ENCODE measurements at regions of chr2 and their contacts with region 1.

Region 1: DNA sequence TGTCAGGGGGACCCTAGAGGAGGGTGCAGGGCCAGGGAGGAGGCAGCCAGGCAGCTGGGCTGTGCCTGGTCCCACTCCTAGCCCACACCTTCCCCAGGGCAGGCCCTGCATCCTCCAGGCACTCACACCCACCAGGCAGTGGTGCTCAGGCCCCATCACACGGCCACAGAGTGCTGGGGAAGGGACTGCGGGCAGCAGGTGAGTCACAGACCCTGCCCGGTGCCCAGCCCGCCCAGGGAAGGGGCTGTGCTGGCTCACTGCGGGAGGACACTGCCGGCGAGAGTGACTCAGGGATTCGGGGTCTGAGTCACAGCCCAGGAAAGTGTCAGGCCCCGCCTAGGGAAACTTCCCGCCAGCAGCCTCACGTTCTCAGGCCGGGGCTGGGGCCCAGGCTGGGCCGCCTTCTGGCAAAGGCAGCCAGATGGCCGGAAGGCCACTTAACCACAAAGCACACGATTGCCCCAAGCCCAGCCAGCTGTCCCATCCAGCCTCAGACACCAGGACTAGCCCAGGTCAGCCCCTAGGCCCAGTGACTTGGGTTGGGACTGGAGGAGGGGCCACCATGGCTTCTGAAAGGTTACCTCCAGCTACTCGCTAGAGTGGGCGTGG is 42.2 kb downstream of the BIN1 start:
- DNase-seq: peak in 1 of 2 experiments; percentile 43
- H3K4me3 ChIP-seq: no peak overlapping the region
- H3K27ac ChIP-seq: peak overlapping the region; percentile 59; the same call in 1 of the 2 replicates
- H3K4me1 ChIP-seq: peaks cover 0 to 15% (median 8%) of the 10 kb centered on the region in 4 experiments; a peak in 5 of 7 replicates
- H3K27me3 ChIP-seq: peaks cover 0 to 3% (median 0%) of the 10 kb centered on the region in 4 experiments; a peak in 1 of 7 replicates
- CTCF ChIP-seq: no peak
- EP300 ChIP-seq: no peak
- POLR2A ChIP-seq: no peak
- RAD21 ChIP-seq: 0 out of 4 replicates have a peak, but pooled peaks of 1 of the 2 experiments have one; percentile 3

Region 2: DNA sequence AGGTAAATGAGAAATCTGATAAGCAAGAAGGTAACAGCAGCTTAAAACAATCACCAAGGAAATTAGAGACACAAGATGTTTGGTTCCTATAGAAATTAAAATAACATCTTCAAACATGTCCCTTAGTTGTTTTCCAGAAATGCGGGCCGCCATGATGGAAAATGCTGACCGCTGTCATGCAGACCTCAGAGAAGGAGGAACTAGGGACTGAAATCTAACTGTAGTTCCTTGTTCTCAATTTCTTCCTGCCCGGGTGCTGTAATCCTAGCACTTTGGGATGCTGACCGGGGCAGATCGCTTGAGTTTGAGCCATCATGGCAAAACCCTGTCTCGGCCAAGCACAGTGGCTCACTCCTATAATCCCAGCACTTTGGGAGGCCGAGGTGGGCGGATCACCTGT is 115.0 kb before region 1 on chr2:
- CTCF ChIA-PET with region 1: no interaction called
- POLR2A ChIA-PET with region 1: no interaction called
- DNase-seq: no peak
- H3K4me3 ChIP-seq: no peak overlapping the region
- H3K27ac ChIP-seq: no peak overlapping the region
- H3K4me1 ChIP-seq: peaks cover 5 to 10% (median 8%) of the 10 kb centered on the region in 4 experiments
- H3K27me3 ChIP-seq: peaks cover 0 to 18% (median 8%) of the 10 kb centered on the region in 4 experiments; a peak in 5 of 7 replicates
- CTCF ChIP-seq: no peak
- EP300 ChIP-seq: no peak
- POLR2A ChIP-seq: no peak
- RAD21 ChIP-seq: no peak

Region 3: DNA sequence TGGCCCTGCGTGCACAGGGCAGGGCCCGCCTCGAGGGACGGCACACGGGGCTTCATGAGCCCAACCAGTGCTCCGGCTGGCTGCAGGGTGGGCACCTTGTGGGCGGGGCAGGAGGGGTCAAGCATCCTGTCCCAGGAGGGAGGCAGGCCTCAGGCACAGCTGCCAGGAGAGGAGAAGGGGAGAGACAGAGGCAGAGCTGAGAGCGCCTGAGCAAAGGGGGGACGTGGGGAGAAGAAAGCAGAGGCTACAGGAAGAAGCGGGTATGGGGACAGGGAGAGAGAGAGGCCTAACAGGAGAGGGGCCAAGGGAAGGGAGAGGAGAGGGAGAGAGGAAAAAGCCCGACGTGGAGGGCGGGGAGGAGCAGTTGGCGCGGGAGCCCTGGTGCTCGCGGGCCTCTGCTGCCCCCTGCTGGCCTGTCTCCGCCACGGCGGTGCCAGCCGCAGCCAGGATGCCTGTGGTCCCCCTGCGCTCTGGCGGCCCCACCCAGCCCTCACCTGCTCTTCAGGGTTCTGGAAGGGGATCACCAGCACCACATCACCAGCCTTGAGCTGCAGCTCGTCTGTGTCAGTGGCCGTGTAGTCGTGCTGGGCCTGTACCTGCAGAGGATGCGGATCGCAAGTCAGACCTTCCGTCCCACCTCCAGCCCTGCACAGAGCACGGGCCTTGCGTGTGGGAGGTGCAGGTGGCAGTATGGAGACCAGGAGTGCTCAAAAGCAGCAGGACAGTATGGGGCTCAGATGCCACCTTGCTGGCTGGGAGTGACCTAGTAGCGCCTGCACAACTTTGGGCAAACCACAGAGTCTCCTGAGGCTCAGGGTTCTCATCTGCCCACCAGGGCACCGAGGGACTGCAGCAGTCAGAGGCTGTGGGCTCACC is 14.6 kb before region 1 on chr2:
- CTCF ChIA-PET with region 1: interaction called, 35 read pairs
- POLR2A ChIA-PET with region 1: no interaction called
- DNase-seq: peak; percentile 41 to 95
- H3K4me3 ChIP-seq: no peak overlapping the region
- H3K27ac ChIP-seq: no peak overlapping the region
- H3K4me1 ChIP-seq: peaks cover 0 to 6% (median 0%) of the 10 kb centered on the region in 4 experiments; a peak in 2 of 7 replicates
- H3K27me3 ChIP-seq: no peaks in the 10 kb centered on the region
- CTCF ChIP-seq: peak in 2 of 3 experiments; percentile 85 to 96; a peak in 3 of 4 replicates
- EP300 ChIP-seq: no peak; a peak in 1 of 3 replicates
- POLR2A ChIP-seq: no peak
- RAD21 ChIP-seq: peak; percentile 82 to 87

Region 4: DNA sequence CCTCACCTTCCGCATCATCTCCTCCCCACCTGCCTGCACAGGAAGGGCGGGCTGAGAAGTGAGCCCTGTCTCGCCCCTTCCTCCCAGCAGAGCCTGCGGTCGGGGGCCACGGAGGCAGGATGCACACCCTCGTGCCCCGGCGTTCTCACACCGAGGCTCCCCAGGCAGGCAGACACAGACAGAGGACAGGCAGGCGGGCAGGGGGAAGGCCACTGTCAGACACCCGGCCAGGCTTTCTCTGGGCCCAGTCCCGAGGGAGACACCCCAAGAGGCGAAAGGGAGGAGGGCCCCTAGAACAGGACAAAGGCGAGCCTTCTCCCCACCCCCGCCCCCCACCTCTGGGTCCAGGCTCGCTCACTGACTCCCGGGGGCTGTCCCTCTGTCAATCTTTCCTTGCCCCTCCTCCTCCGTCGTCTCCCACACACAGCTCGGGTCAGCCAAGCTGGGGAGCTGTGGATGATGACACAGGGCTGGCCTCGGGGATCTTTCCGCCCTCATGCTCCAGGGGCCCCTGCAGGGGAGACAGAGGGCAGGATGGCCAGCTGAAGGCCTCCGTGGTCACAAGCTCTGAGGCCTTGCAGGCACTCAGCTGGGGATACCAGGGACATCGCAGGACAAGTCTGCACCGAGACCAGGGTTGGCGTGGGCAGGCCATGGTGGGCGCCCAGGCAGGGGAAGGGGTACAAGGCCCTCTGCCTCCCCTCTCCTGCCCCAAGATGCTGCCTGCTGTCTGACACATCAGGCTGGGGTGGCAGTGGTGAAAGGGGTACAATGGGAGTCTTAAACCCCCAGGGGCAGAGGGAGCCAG is 17.3 kb after region 1 on chr2:
- CTCF ChIA-PET with region 1: interaction called, 70 read pairs
- POLR2A ChIA-PET with region 1: interaction called, 3 read pairs
- DNase-seq: no peak
- H3K4me3 ChIP-seq: no peak overlapping the region
- H3K27ac ChIP-seq: no peak overlapping the region; the same call in 1 of the 2 replicates
- H3K4me1 ChIP-seq: peaks cover 0 to 31% (median 9%) of the 10 kb centered on the region in 4 experiments; a peak in 5 of 7 replicates
- H3K27me3 ChIP-seq: no peaks in the 10 kb centered on the region
- CTCF ChIP-seq: no peak
- EP300 ChIP-seq: no peak
- POLR2A ChIP-seq: no peak
- RAD21 ChIP-seq: no peak

Region 5: GRCh38 chr2:127106951-127107621 is 42.3 kb after region 1 on chr2 and contains the start of gene BIN1:
- CTCF ChIA-PET with region 1: interaction called, 132 read pairs
- POLR2A ChIA-PET with region 1: no interaction called
- DNase-seq: peak; percentile 70 to 90
- H3K4me3 ChIP-seq: peak within 1 kb of the TSS; percentile 65 to 85 (median 72)
- H3K27ac ChIP-seq: no peak within 1 kb of the TSS
- H3K4me1 ChIP-seq: peaks cover 6 to 21% (median 13%) of the 10 kb centered on the region in 4 experiments
- H3K27me3 ChIP-seq: peaks cover 0 to 7% (median 0%) of the 10 kb centered on the region in 4 experiments; a peak in 1 of 7 replicates
- CTCF ChIP-seq: no peak
- EP300 ChIP-seq: no peak
- POLR2A ChIP-seq: peak in 1 of 2 experiments; percentile 36; a peak in 2 of 3 replicates
- RAD21 ChIP-seq: no peak
- total RNA-seq, gene BIN1: 35.6 and 41.9 TPM in 2 replicates

Region 6: DNA sequence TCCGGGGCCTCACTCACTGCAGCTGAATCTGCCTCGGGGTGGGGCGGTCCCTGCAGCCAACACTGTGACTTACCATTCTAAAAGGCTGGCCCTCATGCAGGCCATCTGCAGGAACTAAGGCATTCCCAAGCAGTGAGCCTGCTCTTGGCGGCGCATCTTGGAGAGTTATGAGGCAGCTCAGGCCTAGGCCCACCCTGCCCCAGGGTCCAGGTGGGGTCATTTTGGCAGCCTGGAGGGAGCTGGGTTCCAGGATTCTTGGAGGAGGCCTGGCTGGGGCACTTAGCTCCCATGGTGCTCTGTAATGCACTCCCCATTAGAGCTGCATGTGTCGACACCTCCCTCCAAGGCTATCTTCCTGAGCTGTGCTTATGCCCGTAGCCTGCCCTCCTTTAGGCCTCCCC is 57.0 kb after region 1 on chr2:
- CTCF ChIA-PET with region 1: interaction called, 12 read pairs
- POLR2A ChIA-PET with region 1: no interaction called
- DNase-seq: no peak
- H3K4me3 ChIP-seq: no peak overlapping the region
- H3K27ac ChIP-seq: no peak overlapping the region
- H3K4me1 ChIP-seq: no peaks in the 10 kb centered on the region
- H3K27me3 ChIP-seq: no peaks in the 10 kb centered on the region
- CTCF ChIP-seq: no peak
- EP300 ChIP-seq: no peak
- POLR2A ChIP-seq: no peak
- RAD21 ChIP-seq: no peak

Region 7: GRCh38 chr2:127157651-127158470 is 93.1 kb after region 1 on chr2:
- CTCF ChIA-PET with region 1: interaction called, 39 read pairs
- POLR2A ChIA-PET with region 1: no interaction called
- DNase-seq: peak; percentile 57 to 81
- H3K4me3 ChIP-seq: no peak overlapping the region
- H3K27ac ChIP-seq: no peak overlapping the region
- H3K4me1 ChIP-seq: peaks cover 0 to 8% (median 5%) of the 10 kb centered on the region in 4 experiments; a peak in 4 of 7 replicates
- H3K27me3 ChIP-seq: no peaks in the 10 kb centered on the region
- CTCF ChIP-seq: peak; percentile 76 to 86 (median 78)
- EP300 ChIP-seq: no peak
- POLR2A ChIP-seq: no peak
- RAD21 ChIP-seq: peak; percentile 73 to 84

Region 8: GRCh38 chr2:127174136-127174535 is 109.4 kb after region 1 on chr2:
- CTCF ChIA-PET with region 1: interaction called, 22 read pairs
- POLR2A ChIA-PET with region 1: interaction called, 4 read pairs
- DNase-seq: no peak
- H3K4me3 ChIP-seq: no peak overlapping the region
- H3K27ac ChIP-seq: no peak overlapping the region
- H3K4me1 ChIP-seq: peaks cover 0 to 4% (median 3%) of the 10 kb centered on the region in 4 experiments; a peak in 4 of 7 replicates
- H3K27me3 ChIP-seq: no peaks in the 10 kb centered on the region; a peak in 1 of 7 replicates
- CTCF ChIP-seq: peak; percentile 34 to 68 (median 54)
- EP300 ChIP-seq: no peak
- POLR2A ChIP-seq: no peak
- RAD21 ChIP-seq: peak; percentile 62 to 71